ENCODE measurements at regions of chr5 and their contacts with region 1.

Region 1: DNA sequence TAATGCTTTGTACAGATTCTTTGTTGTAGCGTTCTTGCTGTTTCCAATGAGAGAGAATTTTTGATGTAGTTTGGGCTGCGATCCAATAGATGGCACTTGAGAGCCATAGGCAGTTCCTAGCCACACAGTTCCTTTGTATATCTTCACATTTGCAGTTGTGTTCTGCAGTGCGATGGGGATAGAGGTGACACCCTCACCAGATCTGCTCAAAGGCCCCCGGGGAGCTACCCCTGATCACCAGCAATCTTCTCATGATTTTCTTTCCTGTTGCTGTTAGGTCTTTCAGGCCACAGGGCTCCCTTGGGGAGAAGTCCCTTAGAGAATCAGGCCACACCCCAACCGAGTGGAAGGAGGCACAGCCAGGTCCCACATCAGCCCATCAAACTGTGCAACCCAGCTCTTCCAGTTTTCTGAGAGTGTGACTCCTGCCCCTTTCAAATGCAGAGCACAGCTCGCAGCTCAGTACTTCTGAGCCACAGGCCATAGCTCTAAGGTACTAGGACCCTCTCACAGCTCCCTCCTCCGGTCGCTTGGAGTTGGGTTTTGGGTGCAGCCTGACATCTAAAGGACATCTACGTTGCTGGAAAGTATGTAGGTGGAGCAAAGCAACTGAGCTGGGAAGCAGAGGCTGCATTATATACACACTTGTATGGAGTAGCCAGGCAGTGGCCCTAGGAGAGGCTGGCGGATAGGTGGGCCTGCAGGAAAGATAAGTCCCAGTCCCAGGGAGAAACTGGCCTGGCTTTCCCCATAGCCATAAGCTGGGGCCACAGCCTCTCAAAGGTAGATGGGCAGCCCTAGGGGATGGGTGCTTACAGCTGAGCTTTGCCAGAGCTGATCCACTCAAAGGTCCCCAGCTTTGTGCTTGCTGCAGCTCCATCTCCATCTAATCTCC is 353.5 kb downstream of the SLCO4C1 start:
- DNase-seq: peak in 3 of 6 donors; percentile 20 to 38 (median 21)
- ATAC-seq: peak; percentile 60 to 93 (median 88)
- H3K4me3 ChIP-seq: no peak overlapping the region
- H3K27ac ChIP-seq: no peak overlapping the region
- H3K4me1 ChIP-seq: no peaks in the 10 kb centered on the region
- H3K27me3 ChIP-seq: no peaks in the 10 kb centered on the region
- CTCF ChIP-seq: peak in 3 of 4 donors; percentile 53 to 63 (median 54)

Region 2: GRCh38 chr5:101897914-101898313 is 44.7 kb before region 1 on chr5:
- intact Hi-C with region 1: no loop called
- DNase-seq: no peak
- ATAC-seq: peak in 1 of 4 donors; percentile 20
- H3K4me3 ChIP-seq: no peak overlapping the region
- H3K27ac ChIP-seq: no peak overlapping the region
- H3K4me1 ChIP-seq: no peaks in the 10 kb centered on the region
- H3K27me3 ChIP-seq: no peaks in the 10 kb centered on the region
- CTCF ChIP-seq: no peak

Region 3: DNA sequence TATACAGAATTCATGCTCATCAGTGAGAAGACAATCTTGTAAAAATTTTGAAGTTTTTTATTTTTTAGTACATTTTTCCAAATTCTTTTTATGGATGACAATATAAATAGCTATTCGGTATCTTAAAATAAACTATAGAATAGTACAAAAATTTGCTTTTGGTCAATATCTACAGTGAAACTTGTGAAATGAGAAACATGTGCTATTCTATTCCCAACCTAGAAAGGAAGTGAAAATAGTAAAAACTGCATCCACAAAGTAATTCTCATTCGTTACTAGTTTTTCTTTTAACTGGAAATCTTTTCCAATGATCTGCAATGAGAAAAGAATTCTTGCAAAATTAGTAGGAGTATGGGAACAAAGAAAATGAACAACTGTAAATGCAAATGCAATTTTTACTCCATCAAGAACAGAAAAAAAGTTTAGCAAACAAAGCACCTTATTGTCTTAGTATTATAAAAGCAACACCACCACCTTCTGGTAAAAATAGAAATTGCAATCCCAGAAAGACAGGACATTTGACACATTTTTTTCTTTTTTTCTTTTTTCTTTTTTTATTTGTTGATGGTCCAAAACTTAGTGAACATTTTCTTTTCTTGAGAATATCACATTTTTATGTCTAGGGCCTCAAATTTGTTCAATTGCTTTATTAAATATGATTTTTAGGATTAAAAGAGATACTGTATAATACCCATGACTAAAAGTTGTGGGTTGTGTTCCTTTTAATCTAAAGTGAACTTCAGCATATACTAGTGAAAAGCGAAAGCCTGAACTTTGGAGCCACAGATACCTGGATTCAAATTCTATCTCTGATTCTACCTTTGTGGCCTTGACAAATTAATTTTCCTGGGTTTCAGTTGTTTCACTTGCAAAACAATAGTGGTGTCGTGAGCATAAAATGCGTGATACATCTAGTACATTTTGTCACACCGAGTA is 281.2 kb after region 1 on chr5:
- intact Hi-C with region 1: loop called in 1 of 3 experiments (anchors 10 kb)
- DNase-seq: no peak
- ATAC-seq: peak in 3 of 4 donors; percentile 76 to 82 (median 81)
- H3K4me3 ChIP-seq: no peak overlapping the region
- H3K27ac ChIP-seq: no peak overlapping the region
- H3K4me1 ChIP-seq: peaks cover 0 to 13% (median 8%) of the 10 kb centered on the region in 3 donors
- H3K27me3 ChIP-seq: no peaks in the 10 kb centered on the region
- CTCF ChIP-seq: peak; percentile 42 to 70 (median 52)